Activated CD8-positive, alpha-beta T cell treated with anti-CD3 and anti-CD28 coated beads for 36 hours (primary cell): ENCODE measurements at regions of chrX and their contacts with region 1.

Region 1: GRCh38 chrX:40539214-40540142 is 41.3 kb upstream of the ATP6AP2 start:
- DNase-seq: peak; percentile 88
- ATAC-seq: peak; percentile 93
- H3K4me3 Mint-ChIP-seq: peak overlapping the region; percentile 36
- H3K27ac Mint-ChIP-seq: peak overlapping the region; percentile 75
- H3K4me1 Mint-ChIP-seq: peaks cover 23% of the 10 kb centered on the region
- H3K27me3 Mint-ChIP-seq: no peaks in the 10 kb centered on the region
- CTCF ChIP-seq: no peak

Region 2: GRCh38 chrX:40468033-40468846 is 71.2 kb before region 1 on chrX:
- CTCF ChIA-PET with region 1: no interaction called
- POLR2A ChIA-PET with region 1: no interaction called
- intact Hi-C with region 1: no loop called
- DNase-seq: peak; percentile 73
- ATAC-seq: peak; percentile 81
- H3K4me3 Mint-ChIP-seq: no peak overlapping the region
- H3K27ac Mint-ChIP-seq: peak overlapping the region; percentile 46
- H3K4me1 Mint-ChIP-seq: peaks cover 32% of the 10 kb centered on the region
- H3K27me3 Mint-ChIP-seq: no peaks in the 10 kb centered on the region
- CTCF ChIP-seq: no peak

Region 3: GRCh38 chrX:40504801-40505605 is 34.5 kb before region 1 on chrX:
- CTCF ChIA-PET with region 1: no interaction called
- POLR2A ChIA-PET with region 1: no interaction called
- intact Hi-C with region 1: no loop called
- DNase-seq: no peak
- ATAC-seq: no peak
- H3K4me3 Mint-ChIP-seq: no peak overlapping the region
- H3K27ac Mint-ChIP-seq: no peak overlapping the region
- H3K4me1 Mint-ChIP-seq: no peaks in the 10 kb centered on the region
- H3K27me3 Mint-ChIP-seq: no peaks in the 10 kb centered on the region
- CTCF ChIP-seq: no peak

Region 4: GRCh38 chrX:40570346-40571093 is 31.0 kb after region 1 on chrX:
- CTCF ChIA-PET with region 1: interaction called, 13 read pairs
- POLR2A ChIA-PET with region 1: no interaction called
- intact Hi-C with region 1: no loop called
- DNase-seq: peak; percentile 13
- ATAC-seq: peak; percentile 64
- H3K4me3 Mint-ChIP-seq: peak overlapping the region; percentile 72
- H3K27ac Mint-ChIP-seq: peak overlapping the region; percentile 93
- H3K4me1 Mint-ChIP-seq: peaks cover 14% of the 10 kb centered on the region
- H3K27me3 Mint-ChIP-seq: no peaks in the 10 kb centered on the region
- CTCF ChIP-seq: no peak

Region 5: GRCh38 chrX:40580537-40581335 is 41.3 kb after region 1 on chrX and contains the start of gene ATP6AP2:
- CTCF ChIA-PET with region 1: interaction called, 13 read pairs
- POLR2A ChIA-PET with region 1: no interaction called
- intact Hi-C with region 1: no loop called
- DNase-seq: peak; percentile 93
- ATAC-seq: peak; percentile 98
- H3K4me3 Mint-ChIP-seq: peak within 1 kb of the TSS; percentile 83
- H3K27ac Mint-ChIP-seq: peak within 1 kb of the TSS; percentile 87
- H3K4me1 Mint-ChIP-seq: peaks cover 28% of the 10 kb centered on the region
- H3K27me3 Mint-ChIP-seq: no peaks in the 10 kb centered on the region
- CTCF ChIP-seq: no peak
- total RNA-seq, gene ATP6AP2: 42.9 to 45.5 TPM

Region 6: GRCh38 chrX:40628506-40628905 is 89.0 kb after region 1 on chrX:
- CTCF ChIA-PET with region 1: interaction called, 11 read pairs
- POLR2A ChIA-PET with region 1: no interaction called
- intact Hi-C with region 1: no loop called
- DNase-seq: no peak
- ATAC-seq: no peak
- H3K4me3 Mint-ChIP-seq: no peak overlapping the region
- H3K27ac Mint-ChIP-seq: no peak overlapping the region
- H3K4me1 Mint-ChIP-seq: peaks cover 7% of the 10 kb centered on the region
- H3K27me3 Mint-ChIP-seq: no peaks in the 10 kb centered on the region
- CTCF ChIP-seq: no peak

Region 7: DNA sequence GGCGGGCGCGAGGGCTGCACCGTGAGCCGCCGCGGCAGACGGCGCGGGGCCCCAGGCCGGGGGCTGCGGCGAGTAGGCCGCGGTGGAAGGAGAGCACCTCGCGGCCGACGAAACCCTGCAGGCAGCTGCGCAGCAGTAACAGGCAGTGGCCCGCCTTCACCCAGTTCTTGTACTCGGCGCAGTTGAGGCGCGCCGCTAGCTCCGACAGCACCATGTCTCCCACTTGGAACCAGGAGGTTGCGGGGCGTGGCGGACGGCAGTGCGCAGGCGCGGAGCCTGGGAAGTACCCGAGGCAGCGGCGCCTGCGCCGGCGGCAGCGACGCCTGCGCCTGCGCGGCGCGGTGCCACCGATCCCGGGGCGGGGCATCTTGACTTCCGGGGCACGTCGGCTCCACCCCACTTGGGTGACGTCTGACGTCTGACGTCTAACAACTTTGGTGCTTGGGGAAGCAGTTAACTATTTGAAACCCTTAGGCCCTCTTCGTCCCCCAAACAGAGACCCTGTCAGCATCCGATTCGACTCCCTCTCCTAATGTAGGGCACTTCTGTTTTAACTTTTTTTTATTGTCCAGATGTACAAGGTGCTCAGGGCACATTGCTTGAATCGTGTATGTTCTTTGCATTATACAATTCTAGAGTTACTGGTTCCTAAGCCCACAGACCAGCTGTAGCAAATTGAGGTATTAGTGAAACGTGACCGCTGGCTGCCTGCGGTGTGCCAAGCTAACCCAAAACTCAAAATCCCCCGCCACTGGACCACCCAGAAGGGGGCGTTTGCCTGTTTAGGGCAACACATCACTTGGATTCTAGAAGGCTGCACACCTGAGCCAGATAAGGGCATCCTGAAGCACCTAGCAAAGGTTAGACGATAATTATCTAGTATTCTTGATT is 108.1 kb after region 1 on chrX and contains the start of gene CXorf38:
- CTCF ChIA-PET with region 1: interaction called, 10 read pairs
- POLR2A ChIA-PET with region 1: no interaction called
- intact Hi-C with region 1: loop called (anchors 5 kb)
- DNase-seq: peak; percentile 93
- ATAC-seq: peak; percentile 80
- H3K4me3 Mint-ChIP-seq: peak within 1 kb of the TSS; percentile 98
- H3K27ac Mint-ChIP-seq: peak within 1 kb of the TSS; percentile 97
- H3K4me1 Mint-ChIP-seq: peaks cover 16% of the 10 kb centered on the region
- H3K27me3 Mint-ChIP-seq: no peaks in the 10 kb centered on the region
- CTCF ChIP-seq: no peak
- total RNA-seq, gene CXorf38: 21.2 to 22.5 TPM

Region 8: DNA sequence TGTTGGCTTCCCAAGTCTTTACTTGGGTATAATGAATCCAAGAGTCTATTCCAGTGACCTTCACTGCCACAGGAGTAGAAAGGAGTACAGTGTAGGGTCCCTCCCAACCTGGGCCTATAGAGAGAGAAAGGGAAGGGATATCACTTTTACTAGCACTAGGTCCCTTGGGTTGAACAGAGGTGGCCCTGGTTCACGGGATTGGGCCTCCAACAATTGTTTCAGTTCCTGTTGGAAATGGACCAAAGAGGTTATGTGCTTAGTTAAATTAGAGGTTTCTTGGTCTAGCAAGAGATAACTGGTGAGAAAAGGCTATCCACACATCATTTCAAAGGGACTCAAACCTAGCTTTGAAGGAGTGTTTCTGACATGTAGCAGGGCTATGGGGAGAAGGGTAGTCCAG is 253.0 kb after region 1 on chrX:
- CTCF ChIA-PET with region 1: interaction called, 28 read pairs
- POLR2A ChIA-PET with region 1: no interaction called
- intact Hi-C with region 1: no loop called
- DNase-seq: no peak
- ATAC-seq: no peak
- H3K4me3 Mint-ChIP-seq: no peak overlapping the region
- H3K27ac Mint-ChIP-seq: no peak overlapping the region
- H3K4me1 Mint-ChIP-seq: no peaks in the 10 kb centered on the region
- H3K27me3 Mint-ChIP-seq: peaks cover 2% of the 10 kb centered on the region
- CTCF ChIP-seq: no peak

Region 9: GRCh38 chrX:40933132-40933705 is 393.7 kb after region 1 on chrX:
- CTCF ChIA-PET with region 1: no interaction called
- POLR2A ChIA-PET with region 1: no interaction called
- intact Hi-C with region 1: no loop called
- DNase-seq: peak; percentile 33
- ATAC-seq: peak; percentile 46
- H3K4me3 Mint-ChIP-seq: peak overlapping the region; percentile 67
- H3K27ac Mint-ChIP-seq: peak overlapping the region; percentile 94
- H3K4me1 Mint-ChIP-seq: peaks cover 20% of the 10 kb centered on the region
- H3K27me3 Mint-ChIP-seq: no peaks in the 10 kb centered on the region
- CTCF ChIP-seq: no peak